ENCODE measurements at regions of chr7 and their contacts with region 1.

Region 1: GRCh38 chr7:39623018-39623731 is at the start of gene RALA:
- DNase-seq: peak; percentile 94
- H3K4me3 Mint-ChIP-seq: peak within 1 kb of the TSS; percentile 90
- H3K27ac Mint-ChIP-seq: peak within 1 kb of the TSS; percentile 87
- H3K4me1 Mint-ChIP-seq: peaks cover 45% of the 10 kb centered on the region
- H3K27me3 Mint-ChIP-seq: no peaks in the 10 kb centered on the region
- total RNA-seq, gene RALA: 27.1 to 31.4 TPM

Region 2: GRCh38 chr7:39566023-39566921 is 56.9 kb before region 1 on chr7 and contains the start of gene YAE1:
- CTCF ChIA-PET with region 1: no interaction called
- POLR2A ChIA-PET with region 1: interaction called, 10 read pairs
- intact Hi-C with region 1: loop called (anchors 1 kb)
- DNase-seq: peak; percentile 88
- H3K4me3 Mint-ChIP-seq: peak within 1 kb of the TSS; percentile 98
- H3K27ac Mint-ChIP-seq: peak within 1 kb of the TSS; percentile 92
- H3K4me1 Mint-ChIP-seq: peaks cover 17% of the 10 kb centered on the region
- H3K27me3 Mint-ChIP-seq: no peaks in the 10 kb centered on the region
- total RNA-seq, gene YAE1: 7.3 to 8.8 TPM

Region 3: DNA sequence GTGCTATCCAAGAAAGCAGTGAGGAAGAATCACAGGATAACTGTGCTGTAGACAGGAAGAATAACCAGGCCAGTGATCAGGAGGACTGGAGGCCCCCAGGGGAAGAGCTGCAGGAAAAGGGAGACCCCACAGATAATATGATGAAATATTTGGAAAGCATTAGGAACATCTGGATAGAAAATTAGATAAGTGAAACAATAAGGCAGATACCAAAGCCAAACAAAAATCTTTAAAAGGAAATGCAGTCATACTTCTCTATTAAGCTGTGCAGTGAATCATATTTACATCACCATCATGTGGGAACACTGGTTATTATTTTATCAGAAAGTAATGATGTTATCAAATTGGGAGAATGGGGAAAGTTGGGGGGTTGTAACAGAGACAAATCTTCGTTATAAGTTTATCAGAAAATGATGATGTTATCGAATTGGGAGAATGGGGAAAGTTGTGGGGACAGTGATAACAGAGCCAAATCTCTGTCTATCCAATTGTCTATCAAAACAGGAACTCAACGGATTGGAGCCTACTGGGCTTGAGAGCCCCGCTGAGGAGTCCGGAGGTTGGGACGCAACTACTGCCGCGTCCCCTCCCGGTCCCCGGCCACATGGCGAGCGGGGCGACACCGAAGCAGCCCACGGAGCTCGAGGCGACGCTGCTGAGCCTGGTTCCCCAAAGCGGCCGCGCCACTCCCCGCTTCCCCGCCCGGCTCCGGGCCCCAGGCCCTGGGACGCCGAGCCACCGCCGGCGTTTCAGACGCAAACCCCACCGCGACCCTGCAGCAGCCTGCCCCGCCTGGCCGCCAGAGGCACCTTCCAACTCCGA is 13.9 kb before region 1 on chr7:
- CTCF ChIA-PET with region 1: interaction called, 3 read pairs
- POLR2A ChIA-PET with region 1: interaction called, 9 read pairs
- intact Hi-C with region 1: loop called (anchors 2 kb)
- DNase-seq: peak; percentile 21
- H3K4me3 Mint-ChIP-seq: peak overlapping the region; percentile 31
- H3K27ac Mint-ChIP-seq: peak overlapping the region; percentile 49
- H3K4me1 Mint-ChIP-seq: peaks cover 41% of the 10 kb centered on the region
- H3K27me3 Mint-ChIP-seq: peaks cover 8% of the 10 kb centered on the region

Measured in activated CD4-positive, alpha-beta memory T cell treated with anti-CD3 and anti-CD28 coated beads for 36 hours (primary cell).